Activated naive CD4-positive, alpha-beta T cell treated with anti-CD3 and anti-CD28 coated beads for 36 hours (primary cell): ENCODE measurements at regions of chr2 and their contacts with region 1.

Region 1: GRCh38 chr2:127415593-127416505 is 2.4 kb upstream of the PROC start:
- DNase-seq: peak; percentile 91
- H3K4me3 Mint-ChIP-seq: peak overlapping the region; percentile 63
- H3K27ac Mint-ChIP-seq: peak overlapping the region; percentile 61
- H3K4me1 Mint-ChIP-seq: peaks cover 34% of the 10 kb centered on the region
- H3K27me3 Mint-ChIP-seq: peaks cover 21% of the 10 kb centered on the region

Region 2: DNA sequence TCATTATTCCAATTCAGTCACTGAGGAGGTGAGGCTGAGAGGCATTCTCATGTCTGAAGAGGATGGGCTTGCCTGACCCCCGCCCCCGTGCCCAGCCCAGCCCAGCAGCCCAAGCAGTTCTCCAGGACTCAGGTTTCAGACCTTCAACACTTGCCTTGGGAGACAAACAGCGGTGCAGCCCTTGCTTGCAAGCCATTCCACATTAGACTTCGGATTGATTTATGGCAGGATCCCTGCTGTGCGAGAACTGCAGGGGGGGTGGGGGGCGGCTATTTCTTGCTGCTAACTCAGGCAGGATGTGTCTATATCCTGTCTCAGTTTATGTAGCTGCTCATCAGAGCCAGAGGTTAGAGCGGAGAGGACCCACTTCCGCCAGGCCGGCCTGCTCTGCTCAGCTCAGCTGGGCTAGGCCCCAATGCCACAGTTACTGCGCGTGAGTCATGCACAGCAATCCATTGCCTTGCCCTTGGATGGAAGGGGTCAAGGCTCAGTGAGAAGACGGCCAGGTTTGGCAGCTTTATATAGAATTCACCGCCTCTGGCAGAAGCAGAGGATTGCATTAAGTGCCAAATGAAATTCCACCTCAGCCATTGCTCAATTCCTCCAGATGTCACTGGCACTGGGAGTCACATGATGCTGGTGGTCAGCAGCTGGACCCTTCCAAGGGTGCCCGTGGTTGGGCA is 758.1 kb before region 1 on chr2:
- CTCF ChIA-PET with region 1: no interaction called
- intact Hi-C with region 1: loop called (anchors 5 kb)
- DNase-seq: peak; percentile 87
- H3K4me3 Mint-ChIP-seq: peak overlapping the region; percentile 100
- H3K27ac Mint-ChIP-seq: peak overlapping the region; percentile 100
- H3K4me1 Mint-ChIP-seq: peaks cover 61% of the 10 kb centered on the region
- H3K27me3 Mint-ChIP-seq: no peaks in the 10 kb centered on the region

Region 3: GRCh38 chr2:127081826-127082633 is 333.8 kb before region 1 on chr2:
- CTCF ChIA-PET with region 1: no interaction called
- intact Hi-C with region 1: loop called (anchors 2 kb)
- DNase-seq: peak; percentile 86
- H3K4me3 Mint-ChIP-seq: peak overlapping the region; percentile 82
- H3K27ac Mint-ChIP-seq: peak overlapping the region; percentile 91
- H3K4me1 Mint-ChIP-seq: peaks cover 74% of the 10 kb centered on the region
- H3K27me3 Mint-ChIP-seq: no peaks in the 10 kb centered on the region

Region 4: GRCh38 chr2:127293748-127294562 is 121.9 kb before region 1 on chr2 and contains the start of gene ERCC3:
- CTCF ChIA-PET with region 1: interaction called, 3 read pairs
- intact Hi-C with region 1: loop called (anchors 1 kb)
- DNase-seq: peak; percentile 88
- H3K4me3 Mint-ChIP-seq: peak within 1 kb of the TSS; percentile 99
- H3K27ac Mint-ChIP-seq: peak within 1 kb of the TSS; percentile 95
- H3K4me1 Mint-ChIP-seq: peaks cover 25% of the 10 kb centered on the region
- H3K27me3 Mint-ChIP-seq: no peaks in the 10 kb centered on the region
- total RNA-seq, gene ERCC3: 37.0 to 41.1 TPM

Region 5: DNA sequence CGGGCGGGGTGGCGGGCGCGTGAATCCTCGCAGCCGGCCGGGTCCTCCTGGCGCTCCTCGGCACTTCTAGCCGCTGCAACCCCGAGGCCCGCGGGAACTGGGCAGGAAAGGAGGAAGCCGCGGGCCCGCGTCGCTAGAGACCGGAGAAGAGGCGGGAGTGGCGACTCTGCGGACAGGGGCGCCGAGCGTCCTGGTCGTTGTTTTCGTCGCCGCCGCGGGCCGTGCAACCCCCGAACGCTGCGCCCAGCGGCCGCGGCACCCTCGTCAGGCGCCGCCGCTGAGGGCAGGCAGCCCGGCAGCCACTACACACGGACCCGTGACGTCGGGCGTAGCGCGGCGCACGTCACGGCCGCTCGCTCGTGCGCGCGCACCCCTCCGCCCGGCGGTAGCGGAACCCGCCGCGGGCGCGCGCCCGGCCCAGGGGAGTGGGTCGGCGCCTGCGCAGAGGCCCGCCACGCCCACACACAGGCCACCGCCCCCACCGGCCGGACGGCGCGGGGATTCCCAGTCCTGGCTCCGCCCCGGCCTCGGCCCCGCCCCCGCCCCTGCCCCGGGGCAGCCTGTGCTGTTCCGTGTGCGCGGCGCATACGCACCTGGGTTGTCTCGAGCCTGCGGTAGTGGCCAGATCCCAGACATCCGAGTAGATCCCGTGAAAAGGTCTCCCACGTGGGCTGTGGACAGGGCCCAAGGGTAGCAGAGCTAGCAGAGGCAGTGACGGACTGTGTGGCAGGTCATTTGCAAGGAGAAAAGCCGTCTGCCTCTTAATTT is 28.0 kb before region 1 on chr2 and contains the start of gene MAP3K2:
- CTCF ChIA-PET with region 1: interaction called, 9 read pairs
- intact Hi-C with region 1: loop called (anchors 1 kb)
- DNase-seq: peak; percentile 92
- H3K4me3 Mint-ChIP-seq: peak within 1 kb of the TSS; percentile 85
- H3K27ac Mint-ChIP-seq: peak within 1 kb of the TSS; percentile 92
- H3K4me1 Mint-ChIP-seq: peaks cover 69% of the 10 kb centered on the region
- H3K27me3 Mint-ChIP-seq: no peaks in the 10 kb centered on the region
- total RNA-seq, gene MAP3K2: 27.1 to 27.4 TPM

Region 6: DNA sequence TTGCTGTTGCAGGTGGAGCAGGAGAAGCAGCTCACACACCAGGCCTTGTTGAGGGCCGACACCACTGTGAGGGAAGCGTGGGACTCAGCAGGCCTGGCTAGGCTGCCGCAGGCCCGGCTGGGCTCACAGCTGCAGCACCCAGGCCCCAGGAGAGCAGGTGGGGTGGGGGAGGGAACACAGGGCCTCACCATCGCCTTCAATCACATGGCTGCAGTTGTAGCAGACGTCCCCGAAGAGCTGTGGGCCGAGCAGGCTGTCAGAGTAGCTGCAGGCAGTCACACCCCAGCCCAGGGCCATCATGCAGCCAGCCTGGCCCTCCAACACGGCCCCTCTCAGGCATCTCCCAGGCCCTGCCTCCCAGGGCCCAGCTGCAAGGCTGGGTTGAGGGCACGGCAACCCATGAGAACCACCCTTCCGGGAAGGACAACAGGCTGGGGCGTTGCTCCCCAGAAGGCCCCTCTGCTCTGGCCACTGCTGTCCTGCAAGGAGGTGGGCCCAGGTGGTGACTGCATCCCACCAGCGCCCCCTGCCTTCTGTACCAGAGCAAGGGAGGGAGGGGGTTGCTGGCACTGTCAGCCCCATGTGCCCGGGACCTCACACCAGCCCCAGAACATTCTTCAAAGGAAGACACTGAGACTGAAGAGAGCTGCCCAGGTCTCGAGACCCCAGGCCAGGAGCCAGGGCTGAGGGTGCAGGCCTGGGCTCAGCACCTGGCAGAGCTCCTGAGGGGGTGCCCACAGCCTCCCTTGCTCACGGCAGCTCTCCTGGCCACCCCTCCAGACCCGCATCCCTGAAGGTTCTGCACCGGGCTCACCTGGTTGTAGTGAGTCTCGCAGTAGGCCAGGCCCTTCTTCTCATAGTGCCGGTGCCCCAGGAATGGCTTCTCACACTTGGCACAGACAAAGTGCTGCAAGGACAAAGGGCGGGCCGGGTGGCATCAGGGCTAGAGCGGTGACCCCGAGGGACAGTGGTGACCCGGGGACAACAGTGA is 224.5 kb after region 1 on chr2:
- CTCF ChIA-PET with region 1: no interaction called
- intact Hi-C with region 1: loop called (anchors 5 kb)
- DNase-seq: peak; percentile 65
- H3K4me3 Mint-ChIP-seq: peak overlapping the region; percentile 65
- H3K27ac Mint-ChIP-seq: peak overlapping the region; percentile 71
- H3K4me1 Mint-ChIP-seq: peaks cover 54% of the 10 kb centered on the region
- H3K27me3 Mint-ChIP-seq: no peaks in the 10 kb centered on the region

Region 7: DNA sequence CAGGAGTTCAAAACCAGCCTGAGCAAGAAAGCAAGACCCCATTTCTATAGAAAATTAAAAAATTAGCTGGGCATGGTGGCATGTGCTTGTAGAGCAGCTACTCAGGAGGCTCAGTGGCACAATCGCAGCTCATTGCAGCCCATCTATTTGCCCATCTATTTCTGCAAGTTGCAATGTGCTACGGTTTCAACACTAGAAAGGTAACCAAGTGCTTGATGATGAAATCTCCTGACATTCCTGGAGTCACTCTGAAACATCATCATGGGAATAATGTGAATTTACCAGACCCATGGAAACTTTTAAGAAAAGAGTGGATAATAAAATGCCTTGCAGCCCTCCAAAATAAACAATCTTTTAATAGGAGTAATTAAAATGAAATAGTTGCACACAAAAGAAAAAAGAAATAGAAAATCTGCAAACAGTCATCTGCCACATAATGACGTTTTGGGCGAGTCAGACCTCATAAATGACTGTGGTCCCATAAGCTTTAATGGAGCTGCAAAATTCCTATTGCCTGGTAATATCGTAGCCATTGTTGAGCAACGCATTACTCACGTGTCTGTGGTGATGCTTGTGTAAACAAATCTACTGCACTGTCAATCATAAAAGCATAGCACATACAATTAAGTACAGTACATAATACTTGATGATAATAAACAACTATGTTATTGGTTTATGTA is 516.5 kb after region 1 on chr2:
- CTCF ChIA-PET with region 1: no interaction called
- intact Hi-C with region 1: no loop called
- DNase-seq: no peak
- H3K4me3 Mint-ChIP-seq: no peak overlapping the region
- H3K27ac Mint-ChIP-seq: no peak overlapping the region
- H3K4me1 Mint-ChIP-seq: peaks cover 7% of the 10 kb centered on the region
- H3K27me3 Mint-ChIP-seq: no peaks in the 10 kb centered on the region